ENCODE measurements at regions of chr6 and their contacts with region 1.

Region 1: GRCh38 chr6:105431226-105431625 is 28.3 kb upstream of the PREP start:
- DNase-seq: peak; percentile 34
- CTCF ChIP-seq: peak; percentile 71

Region 2: GRCh38 chr6:105087571-105088211 is 343.5 kb before region 1 on chr6:
- CTCF ChIA-PET with region 1: interaction called, 63 read pairs
- POLR2A ChIA-PET with region 1: no interaction called
- DNase-seq: peak; percentile 48
- CTCF ChIP-seq: peak; percentile 46

Region 3: GRCh38 chr6:105445481-105445880 is 14.3 kb after region 1 on chr6:
- CTCF ChIA-PET with region 1: interaction called, 14 read pairs
- POLR2A ChIA-PET with region 1: no interaction called
- DNase-seq: no peak
- CTCF ChIP-seq: no peak

Region 4: DNA sequence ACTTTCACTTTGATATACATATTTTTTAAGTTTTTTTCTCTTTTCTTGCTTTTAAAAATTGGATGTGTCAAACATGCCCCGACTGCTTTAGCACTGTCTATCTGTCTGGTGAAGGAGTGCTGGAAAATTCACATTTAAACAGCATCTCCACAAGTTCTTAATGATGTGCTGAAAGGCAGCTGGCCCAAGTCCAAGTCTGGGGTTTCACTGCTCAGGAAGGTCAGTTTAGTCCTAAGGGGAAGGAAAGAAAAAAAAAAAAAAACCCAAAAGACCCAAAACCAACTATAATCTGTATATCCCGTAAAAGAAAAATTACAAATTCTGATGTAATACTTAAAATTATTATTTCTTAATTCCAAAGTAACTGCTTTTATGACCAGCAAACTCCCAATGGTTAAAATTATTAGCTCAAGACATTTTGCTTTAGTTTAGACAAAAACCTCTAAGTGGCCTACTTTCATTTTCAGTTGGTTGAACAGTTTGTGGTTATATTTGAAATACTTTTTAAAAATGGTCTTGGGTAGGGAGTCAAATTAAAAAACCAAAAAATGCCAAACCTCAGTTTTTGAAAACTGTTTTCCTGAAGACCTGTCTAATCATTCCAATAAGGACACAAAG is 51.1 kb after region 1 on chr6:
- CTCF ChIA-PET with region 1: interaction called, 12 read pairs
- POLR2A ChIA-PET with region 1: interaction called, 4 read pairs
- DNase-seq: no peak
- CTCF ChIP-seq: no peak

Region 5: DNA sequence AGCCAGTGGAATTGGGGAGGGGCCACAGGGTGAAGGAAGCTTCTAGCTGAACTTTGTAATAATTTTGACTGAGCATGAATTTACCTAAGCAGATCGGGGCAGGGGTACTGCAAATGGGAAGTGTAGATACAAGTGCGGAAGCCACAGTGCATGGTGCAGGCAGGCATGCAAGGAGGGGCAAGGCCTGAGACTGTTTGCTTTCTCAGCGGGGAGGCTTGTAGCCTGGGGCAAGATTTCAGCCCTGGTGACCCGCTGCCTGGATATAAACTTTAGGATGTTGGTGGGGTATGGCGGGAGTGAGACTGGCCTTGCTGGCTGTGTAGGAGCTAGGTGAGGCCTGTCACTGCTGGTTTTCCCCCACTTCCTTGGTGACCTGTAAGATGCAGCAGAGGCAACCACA is 238.0 kb after region 1 on chr6:
- CTCF ChIA-PET with region 1: no interaction called
- POLR2A ChIA-PET with region 1: no interaction called
- DNase-seq: no peak
- CTCF ChIP-seq: no peak

Region 6: DNA sequence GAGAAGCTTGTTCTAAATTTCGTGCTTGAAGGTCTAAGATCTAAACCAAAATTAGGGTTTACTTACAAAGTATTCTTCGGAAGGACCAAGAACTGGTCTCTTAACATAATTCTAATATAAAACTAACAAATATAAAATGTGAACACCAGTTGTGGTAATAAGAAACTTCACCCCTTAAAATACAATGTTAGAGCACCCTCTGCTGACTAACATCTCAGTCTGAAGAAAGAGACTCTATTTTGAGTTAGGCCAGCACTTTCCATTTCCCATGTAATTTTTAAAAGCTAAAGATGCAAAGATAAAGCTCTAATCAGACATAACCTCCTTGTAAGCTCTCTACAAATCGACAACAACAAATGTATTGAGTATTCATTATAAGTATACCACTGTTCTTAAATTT is 869.7 kb after region 1 on chr6:
- CTCF ChIA-PET with region 1: interaction called, 16 read pairs
- POLR2A ChIA-PET with region 1: no interaction called
- DNase-seq: peak; percentile 16
- CTCF ChIP-seq: peak; percentile 36

Measured in GM10248 (cell line).